G401 (cell line): ENCODE measurements at regions of chr17 and their contacts with region 1.

Region 1: DNA sequence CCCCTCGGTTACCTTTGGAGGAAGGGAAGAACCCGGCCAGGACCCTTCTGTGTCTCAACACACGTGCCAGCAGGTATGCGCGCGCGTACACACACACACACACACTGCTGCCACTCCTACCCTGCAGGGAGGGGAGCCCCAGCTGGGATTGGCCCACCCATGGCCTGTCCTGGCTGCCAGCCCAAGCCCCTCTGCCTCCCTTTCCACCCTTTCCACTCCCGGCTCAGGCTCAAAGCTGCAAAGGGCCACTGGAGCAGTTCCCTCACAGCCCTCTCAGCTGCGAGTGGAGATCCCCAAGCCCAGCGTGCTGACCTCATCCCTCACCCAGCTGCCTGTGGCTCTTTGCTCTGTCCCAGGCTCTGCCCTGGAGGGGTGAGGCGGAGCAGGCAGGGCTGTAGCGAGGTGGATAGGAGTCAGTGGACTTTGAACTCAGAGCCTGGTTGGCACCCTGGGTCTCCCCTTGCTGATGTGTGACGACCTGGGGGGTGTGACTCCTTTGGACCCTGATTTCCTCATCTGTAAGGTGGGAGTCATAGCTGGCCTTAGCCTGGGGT is 14.5 kb downstream of the KIF19 start:
- DNase-seq: no peak

Region 2: DNA sequence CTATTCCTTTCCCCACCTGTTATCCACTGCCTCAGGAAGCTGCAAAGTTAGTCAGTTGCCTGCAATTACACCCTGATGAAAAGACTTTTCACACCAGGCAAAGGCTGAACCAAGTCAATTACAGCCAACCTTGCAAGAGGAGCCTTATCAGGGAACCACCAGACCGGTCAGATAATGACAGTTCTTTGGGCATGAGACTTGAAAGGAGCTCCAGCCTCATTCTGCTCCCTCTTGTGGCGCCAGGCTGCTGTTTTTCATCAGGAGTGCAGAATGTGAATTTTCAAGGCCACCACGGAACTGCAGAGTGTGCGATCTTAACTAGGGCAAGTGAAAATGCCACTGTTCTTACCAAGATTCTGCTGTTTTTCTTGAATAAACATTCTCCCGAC is 44.0 kb before region 1 on chr17:
- in situ Hi-C with region 1: loop called (anchors 10 kb)
- DNase-seq: peak; percentile 77